ENCODE measurements at regions of chr3 and their contacts with region 1.

Region 1: GRCh38 chr3:30606301-30607031 is at the start of gene TGFBR2:
- DNase-seq: peak; percentile 96
- H3K4me3 ChIP-seq: peak within 1 kb of the TSS; percentile 92
- H3K27ac ChIP-seq: peak within 1 kb of the TSS; percentile 99
- H3K4me1 ChIP-seq: peaks cover 70% of the 10 kb centered on the region
- H3K27me3 ChIP-seq: no peaks in the 10 kb centered on the region
- CTCF ChIP-seq: peak; percentile 48
- total RNA-seq, gene TGFBR2: 144 TPM

Region 2: DNA sequence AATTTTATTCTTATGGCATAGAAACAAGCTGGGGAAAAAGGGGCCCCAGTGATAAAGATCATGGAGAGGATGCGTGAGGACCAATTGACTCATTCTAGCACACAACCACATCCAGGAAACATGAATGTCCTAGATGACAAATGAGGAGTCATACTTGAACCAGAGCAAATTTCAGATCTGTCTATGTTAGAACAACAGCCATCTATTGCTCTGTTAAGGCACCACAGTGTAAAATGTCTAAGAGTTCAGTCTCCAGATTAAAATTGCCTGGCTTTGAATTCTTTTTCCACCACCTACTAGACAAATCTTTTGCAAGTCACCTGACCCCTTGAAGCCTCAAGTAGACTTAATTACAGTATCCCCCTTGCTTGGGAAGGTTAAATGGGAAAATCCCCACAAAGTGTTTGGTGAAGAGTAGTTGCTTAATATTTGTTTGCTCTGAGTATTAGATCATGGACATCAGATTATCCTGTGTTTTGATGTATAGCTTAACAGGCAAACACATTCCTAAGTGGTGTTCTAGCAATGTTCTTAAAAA is 258.7 kb before region 1 on chr3:
- intact Hi-C with region 1: loop called (anchors 10 kb)
- DNase-seq: no peak
- H3K4me3 ChIP-seq: no peak overlapping the region
- H3K27ac ChIP-seq: peak overlapping the region; percentile 83
- H3K4me1 ChIP-seq: peaks cover 82% of the 10 kb centered on the region
- H3K27me3 ChIP-seq: no peaks in the 10 kb centered on the region
- CTCF ChIP-seq: no peak

Region 3: DNA sequence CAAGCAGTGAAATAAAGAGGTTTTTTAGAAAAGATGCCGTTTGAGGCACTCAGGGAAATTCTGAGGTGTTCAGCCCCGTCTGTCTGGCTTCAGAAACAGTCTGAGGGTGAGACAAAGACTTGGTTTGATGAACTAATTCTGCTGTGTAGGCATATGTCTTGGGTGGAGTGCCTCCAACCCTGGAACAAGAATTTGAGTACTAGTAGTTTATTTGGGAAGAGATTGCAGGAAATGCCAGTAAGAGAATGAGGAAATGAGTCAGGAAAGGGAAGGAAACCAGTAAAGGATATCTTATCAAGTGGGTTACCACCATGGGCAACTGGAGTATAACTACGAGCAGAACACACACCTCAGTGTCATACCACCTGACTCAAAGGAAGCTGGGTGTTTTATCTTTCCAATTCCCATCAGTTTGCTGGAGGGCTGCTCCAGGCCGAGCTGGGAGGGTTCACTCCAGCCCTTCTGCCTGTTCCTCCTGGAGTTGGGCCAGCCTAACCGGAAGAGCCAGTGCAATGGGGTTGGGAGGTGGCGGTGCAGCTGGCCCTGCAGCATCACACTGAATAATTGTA is 75.3 kb after region 1 on chr3:
- intact Hi-C with region 1: loop called (anchors 5 kb)
- DNase-seq: peak; percentile 62
- H3K4me3 ChIP-seq: no peak overlapping the region
- H3K27ac ChIP-seq: peak overlapping the region; percentile 79
- H3K4me1 ChIP-seq: peaks cover 100% of the 10 kb centered on the region
- H3K27me3 ChIP-seq: no peaks in the 10 kb centered on the region
- CTCF ChIP-seq: no peak